ENCODE measurements at regions of chr10 and their contacts with region 1.

Region 1: DNA sequence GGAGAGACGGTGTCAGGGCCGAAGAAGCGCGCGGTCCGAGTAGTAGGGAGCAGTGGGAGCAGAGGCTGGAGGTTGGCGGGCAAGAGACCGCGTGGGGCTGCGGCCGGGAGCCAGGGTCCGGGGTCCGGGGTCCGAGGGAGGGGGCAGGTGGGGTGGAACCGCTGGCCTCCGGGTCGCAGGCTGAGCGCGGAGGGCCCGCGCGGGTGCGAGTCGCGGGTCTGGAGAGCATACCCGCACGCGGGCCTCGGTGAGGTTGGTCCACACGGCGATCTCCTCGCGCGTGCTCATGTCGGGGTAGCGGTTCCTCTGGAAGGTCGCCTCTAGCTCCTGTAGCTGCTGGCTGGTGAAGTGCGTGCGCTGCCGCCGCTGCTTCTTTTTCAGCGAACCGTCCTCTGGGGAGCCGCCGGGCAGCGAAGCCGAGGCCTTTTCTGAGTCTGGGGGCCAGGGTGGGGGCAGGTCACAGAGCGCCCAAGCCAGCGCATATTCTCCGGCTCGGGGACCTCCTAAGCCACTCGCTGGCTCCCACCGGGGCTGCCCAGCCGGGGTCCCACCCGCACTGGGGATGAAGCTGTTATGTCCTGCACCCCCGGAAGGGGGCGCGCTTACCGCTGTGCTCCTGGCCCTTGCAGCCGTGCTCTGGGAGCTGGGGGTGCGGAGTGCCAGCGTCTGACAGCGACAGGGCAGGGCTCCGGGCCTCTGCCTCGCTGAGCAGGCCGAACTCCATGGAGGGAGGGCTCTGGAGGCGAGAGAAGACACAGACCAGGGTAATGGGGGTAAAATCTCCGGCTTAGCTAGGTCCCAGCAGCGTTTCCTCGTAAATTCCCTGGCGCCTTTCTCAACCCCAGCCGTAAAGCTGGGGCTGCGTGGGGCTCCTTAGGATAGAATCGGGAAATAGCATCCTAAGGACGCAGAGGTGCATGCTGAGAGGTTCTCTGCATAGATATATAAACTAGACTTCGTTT is 5.5 kb downstream of the ELOVL3 start:
- DNase-seq: peak; percentile 94
- H3K4me3 Mint-ChIP-seq: peak overlapping the region; percentile 81
- H3K27ac Mint-ChIP-seq: peak overlapping the region; percentile 51
- H3K4me1 Mint-ChIP-seq: peaks cover 10% of the 10 kb centered on the region
- H3K27me3 Mint-ChIP-seq: peaks cover 70% of the 10 kb centered on the region

Region 2: GRCh38 chr10:101995451-101996063 is 236.1 kb before region 1 on chr10:
- intact Hi-C with region 1: no loop called
- DNase-seq: no peak
- H3K4me3 Mint-ChIP-seq: no peak overlapping the region
- H3K27ac Mint-ChIP-seq: no peak overlapping the region
- H3K4me1 Mint-ChIP-seq: peaks cover 2% of the 10 kb centered on the region
- H3K27me3 Mint-ChIP-seq: no peaks in the 10 kb centered on the region

Region 3: DNA sequence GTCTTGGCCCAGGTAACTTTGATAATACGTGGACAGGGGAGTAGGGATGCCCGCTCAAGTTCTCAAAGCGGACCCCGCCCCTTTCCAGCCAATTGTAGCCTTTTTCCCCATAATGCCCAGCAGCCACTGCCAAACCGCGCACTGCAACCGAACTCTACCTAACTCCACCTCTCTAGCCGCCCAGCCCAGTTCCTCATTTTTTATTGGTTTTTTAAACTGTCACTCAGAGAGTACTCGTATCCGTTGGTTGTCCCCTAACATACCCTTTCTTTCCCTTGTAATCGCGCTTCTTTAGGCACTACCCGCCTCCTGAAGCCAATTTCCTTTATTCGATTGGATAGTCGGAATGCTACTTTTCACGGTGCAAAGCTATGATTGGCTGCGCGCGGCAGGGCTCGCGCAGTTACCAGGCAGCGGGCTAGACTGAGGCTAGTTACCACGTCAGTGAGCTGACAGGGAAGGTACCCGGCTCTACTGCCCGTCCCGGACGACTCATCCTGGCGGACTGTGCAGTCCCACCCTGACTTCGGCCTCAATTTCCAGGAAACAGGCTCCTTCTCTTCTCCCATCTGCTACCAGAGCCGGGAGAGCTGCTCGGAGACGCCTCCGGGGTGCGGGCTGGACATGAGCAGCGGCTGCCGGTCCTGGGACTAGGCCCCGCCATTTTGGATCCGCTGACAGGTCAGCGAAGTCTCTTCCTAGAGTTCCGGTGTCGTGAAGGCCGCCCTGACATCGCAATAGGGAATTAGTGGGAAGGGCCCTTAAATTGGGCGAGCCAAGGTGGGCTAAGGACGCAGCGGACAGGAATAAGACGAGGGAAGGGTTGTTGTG is 13.7 kb after region 1 on chr10 and contains the start of gene GBF1:
- intact Hi-C with region 1: loop called (anchors 1 kb)
- DNase-seq: peak; percentile 97
- H3K4me3 Mint-ChIP-seq: peak within 1 kb of the TSS; percentile 100
- H3K27ac Mint-ChIP-seq: peak within 1 kb of the TSS; percentile 94
- H3K4me1 Mint-ChIP-seq: peaks cover 40% of the 10 kb centered on the region
- H3K27me3 Mint-ChIP-seq: peaks cover 14% of the 10 kb centered on the region
- total RNA-seq, gene GBF1: 45.2 and 47.7 TPM in 2 replicates